Calu3 (cell line): ENCODE measurements at regions of chr2 and their contacts with region 1.

Region 1: DNA sequence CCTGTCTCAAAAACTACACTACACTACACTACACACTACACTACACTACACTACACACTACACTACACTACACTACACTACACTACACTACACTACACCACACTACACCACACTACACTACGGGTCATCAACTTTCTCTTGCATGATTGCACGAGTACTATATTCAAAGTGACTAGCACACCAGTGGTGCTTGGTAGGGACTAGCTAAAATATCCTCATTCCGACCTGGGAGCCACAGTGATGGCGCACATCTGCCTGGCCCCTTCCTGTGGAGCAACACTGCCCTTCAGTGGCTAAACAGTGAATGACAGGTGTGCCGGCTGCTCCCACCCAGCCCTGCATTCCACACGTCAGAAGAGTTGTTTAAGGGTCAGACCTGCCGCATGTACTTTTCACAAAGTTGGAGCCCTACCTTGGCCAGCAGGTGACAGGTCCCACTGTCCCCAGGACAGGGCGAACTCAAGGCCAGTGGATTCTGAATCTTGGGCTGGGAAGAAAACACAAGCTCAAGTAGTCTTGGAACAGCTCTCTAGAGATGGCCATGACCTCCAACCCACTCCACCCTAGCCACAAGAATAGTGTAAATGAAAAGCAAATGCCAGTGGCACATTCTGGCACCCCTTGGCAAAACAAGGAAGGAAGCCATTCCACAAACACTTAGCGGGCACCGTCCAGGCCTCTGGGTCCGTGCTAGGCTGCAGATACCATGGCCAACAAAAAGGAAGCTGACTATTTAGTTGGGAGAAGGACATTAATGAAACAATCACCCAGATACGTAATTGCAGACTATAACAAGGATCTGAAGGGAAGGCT is 79.7 kb upstream of the MSH2 start:
- DNase-seq: peak; percentile 85
- H3K4me3 Mint-ChIP-seq: no peak overlapping the region
- H3K27ac Mint-ChIP-seq: no peak overlapping the region
- H3K4me1 Mint-ChIP-seq: peaks cover 17% of the 10 kb centered on the region
- H3K27me3 Mint-ChIP-seq: no peaks in the 10 kb centered on the region
- CTCF ChIP-seq: peak; percentile 96

Region 2: DNA sequence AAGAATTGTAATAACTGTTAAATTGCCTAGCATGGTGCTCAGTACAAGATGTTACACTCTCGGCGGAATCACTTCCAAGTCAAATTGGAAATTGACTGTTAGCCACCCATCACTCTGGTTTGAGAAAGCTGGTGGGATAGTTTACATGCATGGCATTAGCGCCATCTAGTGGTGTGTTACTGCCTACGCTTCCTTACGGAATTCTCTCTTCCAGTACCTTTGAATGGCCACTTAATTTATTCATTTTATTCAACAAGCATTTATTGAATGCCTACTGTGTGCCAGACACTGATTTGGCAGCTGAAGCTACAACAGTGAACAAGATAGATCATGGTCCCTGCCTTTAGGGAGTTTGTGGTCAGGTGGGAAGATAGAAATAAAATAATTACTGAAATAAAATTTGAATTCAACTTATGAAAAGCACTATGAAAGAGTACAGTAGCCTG is 672.6 kb before region 1 on chr2:
- CTCF ChIA-PET with region 1: no interaction called
- intact Hi-C with region 1: loop called (anchors 10 kb)
- DNase-seq: peak; percentile 71
- H3K4me3 Mint-ChIP-seq: no peak overlapping the region
- H3K27ac Mint-ChIP-seq: no peak overlapping the region
- H3K4me1 Mint-ChIP-seq: no peaks in the 10 kb centered on the region
- H3K27me3 Mint-ChIP-seq: peaks cover 14% of the 10 kb centered on the region
- CTCF ChIP-seq: peak; percentile 69

Region 3: GRCh38 chr2:46915811-46916630 is 407.2 kb before region 1 on chr2:
- CTCF ChIA-PET with region 1: interaction called, 3 read pairs
- intact Hi-C with region 1: loop called (anchors 2 kb)
- DNase-seq: peak; percentile 86
- H3K4me3 Mint-ChIP-seq: peak overlapping the region; percentile 88
- H3K27ac Mint-ChIP-seq: peak overlapping the region; percentile 86
- H3K4me1 Mint-ChIP-seq: peaks cover 38% of the 10 kb centered on the region
- H3K27me3 Mint-ChIP-seq: no peaks in the 10 kb centered on the region
- CTCF ChIP-seq: no peak

Region 4: DNA sequence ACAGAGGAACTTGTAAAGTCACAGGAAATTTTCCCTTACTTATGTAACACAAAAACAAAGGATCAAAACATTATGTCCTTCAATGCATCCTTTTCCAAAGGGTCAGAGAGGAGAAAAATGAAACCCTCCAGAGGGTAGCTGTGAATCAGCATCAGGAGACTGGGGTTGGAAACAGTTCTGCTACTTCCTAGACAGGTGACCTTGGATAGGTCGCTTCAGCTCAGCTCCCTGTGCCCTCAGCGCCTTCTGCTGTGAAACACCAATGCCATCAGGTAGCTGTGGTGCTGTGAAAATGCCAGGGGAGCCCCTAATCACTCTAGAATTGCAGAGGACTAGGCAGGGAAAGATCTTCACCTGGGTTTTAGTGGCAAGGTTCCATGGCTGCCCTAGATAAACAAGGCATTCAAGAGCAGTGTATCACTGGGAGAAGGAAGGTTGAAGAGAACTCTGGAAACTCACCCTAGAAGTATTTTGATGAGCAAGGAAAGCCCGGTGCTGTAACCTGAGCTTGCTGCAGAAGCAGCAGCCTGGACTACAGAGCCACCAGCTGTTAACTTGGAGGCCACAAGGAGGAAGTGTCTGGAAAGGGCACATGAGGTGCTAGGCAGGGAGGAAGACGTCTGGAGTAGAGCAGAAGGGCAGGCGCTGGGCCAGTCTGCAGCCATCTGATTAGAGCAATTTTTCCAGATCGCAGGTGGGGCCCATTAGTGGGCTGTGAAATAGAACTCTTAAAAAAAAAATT is 306.9 kb before region 1 on chr2:
- CTCF ChIA-PET with region 1: interaction called, 10 read pairs
- intact Hi-C with region 1: loop called (anchors 1 kb)
- DNase-seq: peak; percentile 81
- H3K4me3 Mint-ChIP-seq: peak overlapping the region; percentile 11
- H3K27ac Mint-ChIP-seq: peak overlapping the region; percentile 51
- H3K4me1 Mint-ChIP-seq: peaks cover 27% of the 10 kb centered on the region
- H3K27me3 Mint-ChIP-seq: no peaks in the 10 kb centered on the region
- CTCF ChIP-seq: no peak

Region 5: DNA sequence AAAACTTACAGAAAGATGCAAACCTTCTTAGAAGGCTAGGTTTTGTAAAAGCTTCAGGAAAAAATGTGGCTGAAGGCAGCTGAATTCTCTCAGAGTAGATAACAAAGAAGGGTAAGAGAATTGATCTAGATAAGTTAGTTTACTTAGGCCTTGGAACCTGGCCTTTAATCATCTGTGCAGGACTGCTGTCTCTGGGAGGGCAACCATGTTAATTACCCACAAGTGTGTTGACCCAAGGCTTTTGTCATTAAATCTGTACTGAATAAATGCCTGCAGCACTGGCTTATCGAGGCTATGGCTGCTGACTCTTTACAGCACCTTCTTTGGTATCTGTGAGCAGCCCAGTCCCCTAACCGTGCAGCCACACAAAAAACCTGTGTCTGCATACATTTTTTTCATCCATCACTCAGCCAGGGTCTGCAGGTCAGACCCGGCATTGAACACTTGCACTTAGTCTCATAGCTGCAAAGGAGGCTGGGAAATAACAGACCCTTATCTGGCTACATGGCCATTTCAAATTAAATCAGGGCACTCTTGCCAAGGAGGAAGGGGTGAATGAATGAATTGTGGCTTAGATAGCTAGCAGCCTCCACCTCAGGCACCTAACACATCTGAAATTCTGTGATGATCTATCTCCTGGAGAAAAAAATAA is 40.5 kb before region 1 on chr2:
- CTCF ChIA-PET with region 1: no interaction called
- intact Hi-C with region 1: no loop called
- DNase-seq: no peak
- H3K4me3 Mint-ChIP-seq: no peak overlapping the region
- H3K27ac Mint-ChIP-seq: no peak overlapping the region
- H3K4me1 Mint-ChIP-seq: peaks cover 7% of the 10 kb centered on the region
- H3K27me3 Mint-ChIP-seq: no peaks in the 10 kb centered on the region
- CTCF ChIP-seq: no peak

Region 6: GRCh38 chr2:47307066-47307465 is 16.1 kb before region 1 on chr2:
- CTCF ChIA-PET with region 1: interaction called, 16 read pairs
- intact Hi-C with region 1: no loop called
- DNase-seq: no peak
- H3K4me3 Mint-ChIP-seq: no peak overlapping the region
- H3K27ac Mint-ChIP-seq: no peak overlapping the region
- H3K4me1 Mint-ChIP-seq: peaks cover 38% of the 10 kb centered on the region
- H3K27me3 Mint-ChIP-seq: no peaks in the 10 kb centered on the region
- CTCF ChIP-seq: no peak